ENCODE measurements at regions of chr6 and their contacts with region 1.

Region 1: DNA sequence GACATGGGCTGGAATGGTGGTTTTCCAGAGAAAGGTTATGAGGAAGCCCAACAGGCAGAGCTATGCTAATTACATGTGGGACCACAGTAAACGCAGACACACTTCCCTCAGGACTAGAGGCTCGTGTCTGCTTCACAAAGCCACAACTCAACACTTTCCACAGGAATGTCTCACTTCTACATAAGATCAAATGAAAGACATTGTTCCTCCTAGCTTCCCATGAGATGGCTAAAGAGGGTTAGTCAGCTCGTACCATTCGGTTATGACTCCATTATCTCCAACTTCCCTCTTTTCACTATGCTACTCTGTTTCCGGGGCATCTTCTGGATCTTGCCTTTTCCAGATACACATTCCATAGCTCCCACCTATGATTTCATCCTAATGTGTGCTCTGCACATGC is 29.1 kb upstream of the ZC3H12D start:
- DNase-seq: no peak
- H3K4me3 ChIP-seq: no peak overlapping the region
- H3K27ac ChIP-seq: no peak overlapping the region
- H3K4me1 ChIP-seq: peaks cover 0 to 3% of the 10 kb centered on the region in 2 experiments; a peak in 1 of 4 replicates
- H3K27me3 ChIP-seq: no peaks in the 10 kb centered on the region
- CTCF ChIP-seq: no peak
- EP300 ChIP-seq: no peak
- RAD21 ChIP-seq: no peak

Region 2: DNA sequence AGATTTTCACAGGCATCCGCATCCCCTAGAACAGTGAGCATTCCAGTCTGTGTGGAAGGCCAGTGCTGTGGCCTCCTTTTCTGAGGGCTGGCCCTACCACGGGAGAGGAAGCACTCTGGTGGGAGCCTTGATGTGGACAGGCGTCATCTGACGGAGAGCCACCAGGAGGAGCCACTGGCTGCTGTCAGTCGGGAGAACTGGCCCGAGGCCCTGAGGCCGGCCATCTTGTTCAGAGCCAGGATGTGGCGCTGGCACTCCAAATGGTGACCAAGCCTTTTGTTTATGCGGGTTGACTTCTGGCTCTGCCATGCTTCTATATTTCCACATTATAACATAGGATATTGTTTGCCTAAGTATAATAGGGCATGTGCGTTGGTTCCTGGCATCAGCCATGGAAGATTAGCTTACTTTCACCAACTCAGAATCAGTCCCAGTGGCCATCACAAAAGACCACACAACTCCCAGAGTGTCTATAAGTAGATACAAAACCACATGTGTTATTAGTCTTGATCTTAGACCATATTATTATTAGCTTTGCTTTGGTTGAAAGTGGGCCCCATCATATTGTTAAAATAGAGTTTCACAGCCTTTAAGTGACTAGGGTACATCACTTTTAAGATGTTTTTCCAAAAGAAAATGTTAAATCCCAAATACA is 470.3 kb before region 1 on chr6:
- CTCF ChIA-PET with region 1: interaction called, 14 read pairs
- POLR2A ChIA-PET with region 1: no interaction called
- DNase-seq: peak; percentile 65
- H3K4me3 ChIP-seq: no peak overlapping the region
- H3K27ac ChIP-seq: no peak overlapping the region
- H3K4me1 ChIP-seq: no peaks in the 10 kb centered on the region; a peak in 1 of 4 replicates
- H3K27me3 ChIP-seq: no peaks in the 10 kb centered on the region
- CTCF ChIP-seq: peak; percentile 51
- EP300 ChIP-seq: no peak
- RAD21 ChIP-seq: peak; percentile 40

Region 3: DNA sequence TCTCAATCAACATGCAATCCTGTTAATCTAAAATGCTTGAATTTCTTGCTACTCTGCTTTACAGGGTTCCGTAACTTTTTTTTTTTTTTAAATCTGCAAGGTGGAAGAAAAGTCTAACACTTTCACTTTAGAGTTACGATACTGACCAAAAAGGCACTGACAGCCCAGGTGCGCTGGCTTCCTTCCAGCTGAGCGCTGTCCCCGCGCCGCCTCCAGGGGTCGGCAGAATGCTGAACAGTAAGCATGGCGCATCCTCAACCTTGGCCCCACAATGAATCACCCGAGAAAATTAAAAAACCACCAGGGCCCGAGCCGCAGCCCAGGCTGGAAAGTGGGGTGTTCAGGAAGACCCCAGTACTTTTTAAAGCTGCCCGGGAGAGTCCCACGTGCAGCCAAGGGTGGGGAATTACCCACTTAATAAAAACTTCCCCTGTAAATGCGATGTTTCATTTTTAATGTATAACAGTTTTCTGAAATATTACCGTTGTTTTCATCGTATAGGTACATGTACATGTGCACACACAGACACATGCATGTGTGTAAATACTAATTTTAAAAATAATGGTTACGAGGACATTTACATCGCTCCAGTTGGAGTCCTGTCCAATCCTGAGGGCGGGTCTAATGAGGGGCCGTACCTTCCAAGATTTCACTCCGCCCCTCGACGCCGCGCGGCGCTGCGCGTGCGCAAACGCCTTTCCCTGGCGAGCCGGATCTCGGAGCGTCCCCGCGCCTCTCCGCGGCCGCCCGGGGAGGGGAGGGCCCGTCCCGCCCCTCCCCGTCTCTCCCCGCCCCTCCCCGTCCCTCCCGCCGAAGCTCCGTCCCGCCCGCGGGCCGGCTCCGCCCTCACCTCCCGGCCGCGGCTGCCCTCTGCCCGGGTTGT is 51.9 kb after region 1 on chr6 and contains the start of gene GINM1:
- CTCF ChIA-PET with region 1: no interaction called
- POLR2A ChIA-PET with region 1: no interaction called
- DNase-seq: peak; percentile 99
- H3K4me3 ChIP-seq: peak within 1 kb of the TSS; percentile 86 to 91
- H3K27ac ChIP-seq: peak within 1 kb of the TSS; percentile 66 to 84
- H3K4me1 ChIP-seq: peaks cover 2 to 4% of the 10 kb centered on the region in 2 experiments; a peak in 3 of 4 replicates
- H3K27me3 ChIP-seq: no peaks in the 10 kb centered on the region
- CTCF ChIP-seq: peak; percentile 67
- EP300 ChIP-seq: no peak
- RAD21 ChIP-seq: peak; percentile 68
- polyA plus RNA-seq, gene GINM1: 24.4 and 27.8 TPM in 2 replicates